Naive thymus-derived CD4-positive, alpha-beta T cell (primary cell): ENCODE measurements at regions of chr2 and their contacts with region 1.

Region 1: GRCh38 chr2:112542123-112542983 is at the start of gene POLR1B:
- DNase-seq: peak in 8 of 9 donors; percentile 57 to 81 (median 77)
- ATAC-seq: peak; percentile 88
- H3K4me3 ChIP-seq: peak within 1 kb of the TSS; percentile 95
- H3K4me3 Mint-ChIP-seq: no peak within 1 kb of the TSS
- H3K27ac ChIP-seq: peak within 1 kb of the TSS; percentile 89
- H3K27ac Mint-ChIP-seq: peak within 1 kb of the TSS in 1 of 9 donors; percentile 98
- H3K4me1 ChIP-seq: peaks cover 14 to 15% of the 10 kb centered on the region in 2 donors
- H3K4me1 Mint-ChIP-seq: peaks cover 12 to 24% (median 19%) of the 10 kb centered on the region in 7 donors
- H3K27me3 ChIP-seq: no peaks in the 10 kb centered on the region
- H3K27me3 Mint-ChIP-seq: no peaks in the 10 kb centered on the region
- total RNA-seq, gene POLR1B: 10.1 to 41.8 (median 25.2) TPM

Region 2: DNA sequence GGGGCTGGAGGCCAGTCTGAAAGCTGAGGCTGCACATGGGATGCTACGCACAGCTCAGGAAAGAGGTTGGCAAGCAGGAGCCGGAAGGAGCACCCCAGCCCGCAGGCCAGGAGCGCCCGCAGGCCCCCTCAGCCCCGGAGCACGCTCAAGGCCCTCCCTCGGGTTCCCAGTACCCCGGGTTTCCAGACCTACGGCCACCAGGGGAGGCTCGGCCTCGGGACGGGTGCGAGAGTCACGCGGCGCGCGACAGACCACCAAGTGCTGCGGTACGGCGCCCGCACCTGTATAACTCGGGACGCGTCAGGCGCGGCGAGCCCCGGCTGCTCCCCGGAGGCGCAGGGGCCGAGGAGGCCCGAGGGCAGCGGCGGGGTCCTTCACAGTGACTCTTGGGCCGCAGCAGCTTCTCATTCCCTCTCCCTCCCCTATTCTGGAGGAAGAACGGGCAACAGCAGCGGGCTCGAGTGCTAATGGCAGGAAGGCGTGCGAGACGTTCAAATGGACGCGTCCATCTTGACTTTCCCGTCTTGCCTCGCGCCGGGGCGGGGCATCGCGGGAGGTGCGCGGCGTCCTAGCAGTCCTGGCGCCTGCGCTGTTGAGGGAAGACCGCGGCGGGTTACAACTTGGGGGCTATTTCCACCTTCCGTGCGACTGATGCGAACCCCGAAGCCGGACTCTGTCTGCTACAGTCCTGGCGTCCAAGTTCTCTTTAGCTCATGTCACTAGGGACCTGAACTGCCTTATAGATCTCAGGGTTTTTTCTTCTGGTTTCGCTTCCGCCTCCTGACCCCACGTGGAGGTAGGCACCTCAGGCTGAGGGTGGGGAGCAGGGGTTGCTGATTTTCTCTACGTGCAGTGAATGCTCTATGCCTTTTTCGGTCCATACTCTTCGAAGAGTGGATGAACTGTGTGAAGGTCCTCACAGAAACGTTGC is 658.4 kb before region 1 on chr2 and contains the start of gene ANAPC1:
- CTCF ChIA-PET with region 1: no interaction called
- POLR2A ChIA-PET with region 1: no interaction called
- intact Hi-C with region 1: loop called in 1 of 2 experiments (anchors 1 kb)
- DNase-seq: peak; percentile 75 to 87 (median 84)
- ATAC-seq: peak; percentile 98
- H3K4me3 ChIP-seq: peak within 1 kb of the TSS; percentile 69
- H3K4me3 Mint-ChIP-seq: peak within 1 kb of the TSS; percentile 92 to 99 (median 96)
- H3K27ac ChIP-seq: peak within 1 kb of the TSS; percentile 85
- H3K27ac Mint-ChIP-seq: peak within 1 kb of the TSS; percentile 92 to 98 (median 96)
- H3K4me1 ChIP-seq: peaks cover 0 to 10% of the 10 kb centered on the region in 2 donors
- H3K4me1 Mint-ChIP-seq: peaks cover 2 to 26% (median 13%) of the 10 kb centered on the region in 7 donors
- H3K27me3 ChIP-seq: no peaks in the 10 kb centered on the region
- H3K27me3 Mint-ChIP-seq: no peaks in the 10 kb centered on the region
- total RNA-seq, gene ANAPC1: 51.8 to 77.2 (median 62.7) TPM

Region 3: DNA sequence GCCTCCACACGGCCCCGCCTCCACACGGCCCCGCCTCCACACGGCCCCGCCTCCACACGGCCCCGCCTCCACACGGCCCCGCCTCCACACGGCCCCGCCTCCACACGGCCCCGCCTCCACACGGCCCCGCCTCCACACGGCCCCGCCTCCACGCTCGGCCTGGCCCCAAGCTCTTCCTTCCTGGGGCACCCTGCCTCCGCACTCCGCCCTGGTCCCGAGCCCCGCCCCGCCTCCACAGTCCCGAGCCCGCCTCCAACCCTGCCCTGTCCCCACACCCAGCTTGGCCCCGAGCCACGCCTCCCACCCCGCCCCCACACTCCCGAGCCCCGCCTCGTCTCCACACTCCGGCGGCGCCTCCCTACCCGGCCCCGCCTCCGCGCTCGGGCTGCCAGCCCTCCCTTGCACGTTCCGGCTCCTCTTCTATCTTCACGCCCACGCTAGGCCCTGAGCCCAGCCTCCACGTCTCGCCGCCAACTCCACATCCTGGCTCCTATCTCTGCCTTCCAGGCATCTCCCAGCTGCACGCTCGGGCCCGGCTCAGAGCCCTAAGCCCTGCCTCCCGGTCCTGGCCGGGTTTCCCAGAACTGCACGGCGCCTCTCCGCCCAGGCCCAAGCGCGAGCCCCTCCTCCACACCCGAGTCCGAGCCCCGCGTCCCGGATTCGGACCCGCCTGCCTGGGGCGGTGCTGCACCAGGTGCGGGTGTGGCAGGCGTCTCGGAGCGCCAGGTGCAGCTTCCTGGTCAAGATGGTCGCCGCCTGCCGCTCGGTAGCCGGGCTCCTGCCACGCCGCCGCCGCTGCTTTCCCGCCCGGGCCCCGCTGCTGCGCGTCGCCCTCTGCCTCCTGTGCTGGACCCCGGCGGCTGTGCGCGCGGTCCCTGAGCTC is 487.3 kb before region 1 on chr2 and contains the start of gene TMEM87B:
- CTCF ChIA-PET with region 1: no interaction called
- POLR2A ChIA-PET with region 1: no interaction called
- intact Hi-C with region 1: loop called (anchors 1 kb)
- DNase-seq: peak; percentile 90 to 98 (median 96)
- ATAC-seq: peak; percentile 80
- H3K4me3 ChIP-seq: peak within 1 kb of the TSS; percentile 85
- H3K4me3 Mint-ChIP-seq: peak within 1 kb of the TSS; percentile 80 to 100 (median 95)
- H3K27ac ChIP-seq: peak within 1 kb of the TSS; percentile 82
- H3K27ac Mint-ChIP-seq: peak within 1 kb of the TSS; percentile 92 to 100 (median 98)
- H3K4me1 ChIP-seq: peaks cover 16 to 19% of the 10 kb centered on the region in 2 donors
- H3K4me1 Mint-ChIP-seq: peaks cover 33 to 48% (median 42%) of the 10 kb centered on the region in 7 donors
- H3K27me3 ChIP-seq: no peaks in the 10 kb centered on the region
- H3K27me3 Mint-ChIP-seq: peaks cover 0 to 2% (median 0%) of the 10 kb centered on the region in 5 donors
- total RNA-seq, gene TMEM87B: 14.0 to 26.9 (median 17.4) TPM

Region 4: GRCh38 chr2:112108178-112108832 is 434.0 kb before region 1 on chr2:
- CTCF ChIA-PET with region 1: no interaction called
- POLR2A ChIA-PET with region 1: no interaction called
- intact Hi-C with region 1: no loop called
- DNase-seq: no peak
- ATAC-seq: no peak
- H3K4me3 ChIP-seq: no peak overlapping the region
- H3K4me3 Mint-ChIP-seq: no peak overlapping the region
- H3K27ac ChIP-seq: no peak overlapping the region
- H3K27ac Mint-ChIP-seq: no peak overlapping the region
- H3K4me1 ChIP-seq: no peaks in the 10 kb centered on the region
- H3K4me1 Mint-ChIP-seq: peaks cover 0 to 3% (median 0%) of the 10 kb centered on the region in 7 donors
- H3K27me3 ChIP-seq: no peaks in the 10 kb centered on the region
- H3K27me3 Mint-ChIP-seq: no peaks in the 10 kb centered on the region

Region 5: GRCh38 chr2:112259509-112260294 is 282.7 kb before region 1 on chr2:
- CTCF ChIA-PET with region 1: no interaction called
- POLR2A ChIA-PET with region 1: no interaction called
- intact Hi-C with region 1: loop called (anchors 2 kb)
- DNase-seq: peak; percentile 63 to 85 (median 79)
- ATAC-seq: peak; percentile 69
- H3K4me3 ChIP-seq: peak overlapping the region; percentile 36
- H3K4me3 Mint-ChIP-seq: peak overlapping the region; percentile 19 to 78 (median 70)
- H3K27ac ChIP-seq: no peak overlapping the region
- H3K27ac Mint-ChIP-seq: peak overlapping the region; percentile 16 to 91 (median 70)
- H3K4me1 ChIP-seq: peaks cover 0 to 6% of the 10 kb centered on the region in 2 donors
- H3K4me1 Mint-ChIP-seq: peaks cover 4 to 23% (median 7%) of the 10 kb centered on the region in 7 donors
- H3K27me3 ChIP-seq: no peaks in the 10 kb centered on the region
- H3K27me3 Mint-ChIP-seq: peaks cover 0 to 9% (median 5%) of the 10 kb centered on the region in 5 donors

Region 6: DNA sequence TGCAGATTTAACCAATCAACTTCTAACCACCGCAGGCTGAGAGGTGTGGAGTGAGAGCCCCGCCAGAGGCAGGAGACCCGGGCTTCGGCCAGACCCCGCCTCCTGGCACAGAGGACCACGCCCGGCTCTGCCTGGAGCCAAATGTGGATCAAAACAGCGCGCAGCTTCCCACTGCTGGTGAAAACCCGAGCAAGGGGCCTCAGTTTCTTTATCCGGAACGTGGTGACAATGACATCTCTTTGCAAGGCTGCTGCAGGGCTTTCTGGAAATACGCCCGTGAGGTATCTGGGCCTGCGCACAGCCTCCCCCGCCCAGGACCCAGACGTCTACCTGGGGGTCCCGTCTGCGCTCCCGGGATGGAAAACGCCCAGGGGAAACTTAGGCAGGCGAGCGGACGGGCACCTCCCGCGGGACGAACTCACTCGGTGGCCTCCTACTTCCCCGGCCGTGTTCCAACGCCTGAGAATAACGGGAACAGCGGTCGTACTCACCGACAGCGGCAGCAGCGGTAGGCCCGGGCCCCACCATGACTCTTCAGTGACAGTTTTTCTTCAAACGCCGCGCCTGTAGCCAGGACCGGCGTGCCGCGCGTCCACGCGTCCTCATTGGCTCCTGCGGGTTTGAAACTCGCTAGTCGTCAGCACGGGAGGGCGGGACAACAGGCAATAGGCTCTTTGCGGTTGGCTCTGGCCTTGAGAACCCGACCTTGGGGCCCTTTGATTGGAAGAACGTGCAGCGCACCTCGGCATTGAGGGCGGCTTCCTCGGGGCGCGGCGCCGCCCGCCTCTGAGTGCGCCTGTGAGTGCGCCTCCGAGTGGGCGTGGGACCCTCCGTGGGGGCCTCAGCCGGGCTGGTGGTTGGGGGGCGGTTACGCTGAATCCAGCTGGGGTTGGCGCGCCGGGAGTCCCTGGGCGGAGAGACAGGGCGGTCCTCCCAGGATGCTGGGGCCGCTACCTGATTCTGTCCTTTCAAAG is 222.0 kb after region 1 on chr2 and contains the start of gene CKAP2L:
- CTCF ChIA-PET with region 1: no interaction called
- POLR2A ChIA-PET with region 1: no interaction called
- intact Hi-C with region 1: loop called in 1 of 2 experiments (anchors 1 kb)
- DNase-seq: peak; percentile 85 to 97 (median 94)
- ATAC-seq: peak; percentile 99
- H3K4me3 ChIP-seq: peak within 1 kb of the TSS; percentile 82
- H3K4me3 Mint-ChIP-seq: peak within 1 kb of the TSS; percentile 90 to 97 (median 92)
- H3K27ac ChIP-seq: peak within 1 kb of the TSS; percentile 65
- H3K27ac Mint-ChIP-seq: peak within 1 kb of the TSS; percentile 29 to 95 (median 71)
- H3K4me1 ChIP-seq: peaks cover 12 to 16% of the 10 kb centered on the region in 2 donors
- H3K4me1 Mint-ChIP-seq: peaks cover 15 to 61% (median 30%) of the 10 kb centered on the region in 7 donors
- H3K27me3 ChIP-seq: no peaks in the 10 kb centered on the region
- H3K27me3 Mint-ChIP-seq: no peaks in the 10 kb centered on the region
- total RNA-seq, gene CKAP2L: 0.69 to 36.2 (median 2.4) TPM in 3 of 5 experiments, not detected in the others

Region 7: DNA sequence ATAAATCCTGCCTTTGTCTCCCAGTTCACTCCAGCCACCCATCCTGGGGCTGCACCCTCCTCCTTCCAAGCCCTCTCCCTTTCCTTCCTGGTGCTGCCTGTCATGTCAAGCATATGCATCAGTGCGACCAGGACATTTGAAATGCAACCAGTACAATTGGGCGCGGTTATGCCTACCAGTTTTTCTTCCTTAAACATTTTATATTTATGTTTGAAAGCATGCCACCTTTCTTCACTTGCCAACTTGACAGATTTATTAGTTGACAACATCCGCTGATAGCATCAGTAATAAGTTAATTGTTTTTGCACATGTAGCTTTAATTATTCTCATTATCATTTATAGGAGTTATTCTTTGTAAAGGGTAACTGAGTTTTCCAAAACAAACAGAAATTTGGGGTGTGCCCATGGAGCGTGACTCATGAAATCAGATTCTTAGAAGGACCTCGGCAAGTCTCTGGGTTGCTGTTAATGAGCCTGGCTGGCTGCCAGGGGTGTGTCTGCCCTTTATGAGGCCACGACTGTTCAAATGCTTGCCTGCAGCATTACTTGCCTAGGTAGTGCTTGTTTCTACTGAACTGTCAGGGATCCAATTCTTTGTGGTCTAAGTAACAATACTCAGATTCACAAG is 327.0 kb after region 1 on chr2:
- CTCF ChIA-PET with region 1: no interaction called
- POLR2A ChIA-PET with region 1: no interaction called
- intact Hi-C with region 1: no loop called
- DNase-seq: peak in 1 of 9 donors; percentile 19
- ATAC-seq: peak; percentile 59
- H3K4me3 ChIP-seq: no peak overlapping the region
- H3K4me3 Mint-ChIP-seq: no peak overlapping the region
- H3K27ac ChIP-seq: no peak overlapping the region
- H3K27ac Mint-ChIP-seq: no peak overlapping the region
- H3K4me1 ChIP-seq: no peaks in the 10 kb centered on the region
- H3K4me1 Mint-ChIP-seq: peaks cover 0 to 7% (median 0%) of the 10 kb centered on the region in 7 donors
- H3K27me3 ChIP-seq: peaks cover 0 to 6% of the 10 kb centered on the region in 2 donors
- H3K27me3 Mint-ChIP-seq: peaks cover 25 to 40% (median 35%) of the 10 kb centered on the region in 5 donors